ENCODE measurements at regions of chr4 and their contacts with region 1.

Region 1: GRCh38 chr4:112633477-112634235 is 3.1 kb downstream of the ZGRF1 start:
- DNase-seq: peak in 2 of 5 donors; percentile 18 to 24
- H3K4me3 ChIP-seq: no peak overlapping the region
- H3K4me3 Mint-ChIP-seq: peak overlapping the region in 1 of 7 donors; percentile 53
- H3K27ac ChIP-seq: no peak overlapping the region
- H3K27ac Mint-ChIP-seq: peak overlapping the region in 4 of 8 donors; percentile 29 to 70 (median 38)
- H3K4me1 ChIP-seq: peaks cover 21% of the 10 kb centered on the region
- H3K4me1 Mint-ChIP-seq: peaks cover 4 to 8% (median 6%) of the 10 kb centered on the region in 3 donors
- H3K27me3 ChIP-seq: no peaks in the 10 kb centered on the region
- H3K27me3 Mint-ChIP-seq: no peaks in the 10 kb centered on the region

Region 2: DNA sequence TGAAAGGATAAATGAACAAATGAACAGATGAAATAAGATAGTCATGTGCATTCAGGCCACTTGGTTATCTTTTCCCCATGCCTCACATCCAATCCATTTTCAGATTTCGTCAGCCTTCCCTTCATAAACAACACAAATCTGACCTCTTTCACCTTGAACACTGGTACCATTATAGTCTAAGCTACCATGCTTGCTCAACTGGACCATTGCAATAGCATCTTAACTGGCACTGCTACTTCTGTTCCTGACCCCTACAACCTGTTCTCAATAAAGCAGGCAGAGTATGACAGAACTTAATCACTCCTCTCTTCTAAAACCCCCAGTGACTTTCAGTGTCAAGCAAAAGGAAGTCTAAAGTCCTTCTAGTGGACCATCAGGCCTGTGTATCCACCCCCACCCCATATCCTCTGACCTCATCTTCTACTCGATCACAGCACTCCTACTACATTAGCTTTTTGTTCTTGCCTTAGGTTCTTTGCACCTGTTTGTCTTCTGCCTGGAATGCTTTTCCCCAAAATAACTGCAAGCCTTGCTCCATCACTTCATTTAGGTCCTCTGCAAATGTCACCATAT is 43.9 kb after region 1 on chr4:
- CTCF ChIA-PET with region 1: no interaction called
- POLR2A ChIA-PET with region 1: no interaction called
- DNase-seq: no peak
- H3K4me3 ChIP-seq: no peak overlapping the region
- H3K4me3 Mint-ChIP-seq: no peak overlapping the region
- H3K27ac ChIP-seq: no peak overlapping the region
- H3K27ac Mint-ChIP-seq: no peak overlapping the region
- H3K4me1 ChIP-seq: no peaks in the 10 kb centered on the region
- H3K4me1 Mint-ChIP-seq: no peaks in the 10 kb centered on the region
- H3K27me3 ChIP-seq: no peaks in the 10 kb centered on the region
- H3K27me3 Mint-ChIP-seq: peaks cover 0 to 8% of the 10 kb centered on the region in 2 donors

Region 3: DNA sequence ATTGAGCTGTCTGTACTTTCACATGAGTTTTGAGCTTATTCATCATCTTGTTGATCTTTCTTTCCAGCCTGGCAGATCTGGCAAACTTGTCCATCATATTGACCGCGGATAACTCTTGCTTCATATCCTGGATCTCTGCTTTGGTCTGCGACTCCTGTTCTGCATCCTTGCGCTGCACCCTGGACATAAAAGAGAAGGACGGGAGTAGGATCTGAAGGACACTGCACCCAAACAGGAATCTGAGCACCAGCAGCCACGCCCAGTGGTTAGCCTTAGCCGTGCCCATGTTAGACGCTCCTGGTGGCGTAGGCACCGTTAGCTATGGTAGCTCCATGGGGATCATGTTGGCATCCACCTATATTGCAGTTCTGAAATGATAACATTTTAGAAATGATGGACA is 59.9 kb after region 1 on chr4:
- CTCF ChIA-PET with region 1: no interaction called
- POLR2A ChIA-PET with region 1: no interaction called
- DNase-seq: no peak
- H3K4me3 ChIP-seq: no peak overlapping the region
- H3K4me3 Mint-ChIP-seq: no peak overlapping the region
- H3K27ac ChIP-seq: no peak overlapping the region
- H3K27ac Mint-ChIP-seq: no peak overlapping the region
- H3K4me1 ChIP-seq: no peaks in the 10 kb centered on the region
- H3K4me1 Mint-ChIP-seq: no peaks in the 10 kb centered on the region
- H3K27me3 ChIP-seq: no peaks in the 10 kb centered on the region
- H3K27me3 Mint-ChIP-seq: peaks cover 11 to 29% of the 10 kb centered on the region in 2 donors

Region 4: GRCh38 chr4:112765317-112765975 is 131.8 kb after region 1 on chr4:
- CTCF ChIA-PET with region 1: interaction called, 10 read pairs
- POLR2A ChIA-PET with region 1: no interaction called
- DNase-seq: peak in 1 of 5 donors; percentile 11
- H3K4me3 ChIP-seq: no peak overlapping the region
- H3K4me3 Mint-ChIP-seq: no peak overlapping the region
- H3K27ac ChIP-seq: no peak overlapping the region
- H3K27ac Mint-ChIP-seq: peak overlapping the region in 1 of 8 donors; percentile 43
- H3K4me1 ChIP-seq: no peaks in the 10 kb centered on the region
- H3K4me1 Mint-ChIP-seq: peaks cover 0 to 5% (median 3%) of the 10 kb centered on the region in 3 donors
- H3K27me3 ChIP-seq: no peaks in the 10 kb centered on the region
- H3K27me3 Mint-ChIP-seq: peaks cover 7 to 10% of the 10 kb centered on the region in 2 donors